ENCODE measurements at regions of chrX and their contacts with region 1.

Region 1: DNA sequence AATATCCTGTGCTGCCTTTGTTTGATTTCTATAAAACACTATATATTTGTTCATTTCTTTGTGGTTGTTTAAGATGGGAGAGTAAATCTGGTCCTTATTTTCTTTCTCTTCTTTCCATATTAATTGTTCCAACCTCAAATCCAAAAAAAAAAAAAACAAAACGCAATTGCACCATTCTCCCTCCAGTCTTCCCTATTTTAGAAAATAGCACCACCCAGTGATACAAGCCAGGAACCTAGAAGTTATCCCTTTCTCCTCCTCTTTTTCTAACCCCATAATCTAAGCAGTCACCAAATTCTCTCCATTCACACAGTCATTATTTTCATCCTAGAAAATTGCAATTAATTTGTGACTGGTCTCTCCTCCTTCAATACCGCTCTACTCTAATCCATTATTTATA is 107.8 kb downstream of the GABRA3 start:
- DNase-seq: no peak
- ATAC-seq: no peak
- H3K4me3 ChIP-seq: no peak overlapping the region
- H3K27ac ChIP-seq: no peak overlapping the region
- H3K4me1 ChIP-seq: no peaks in the 10 kb centered on the region
- H3K27me3 ChIP-seq: peaks cover 0 to 3% (median 0%) of the 10 kb centered on the region in 7 donors
- CTCF ChIP-seq: peak in 5 of 9 donors; percentile 9 to 39 (median 34)

Region 2: GRCh38 chrX:151753313-151754041 is 589.8 kb before region 1 on chrX:
- intact Hi-C with region 1: loop called in 5 of 10 experiments (anchors 5 to 10 kb)
- DNase-seq: peak; percentile 15 to 54
- ATAC-seq: peak; percentile 75 to 95 (median 88)
- H3K4me3 ChIP-seq: no peak overlapping the region
- H3K27ac ChIP-seq: no peak overlapping the region
- H3K4me1 ChIP-seq: no peaks in the 10 kb centered on the region
- H3K27me3 ChIP-seq: peaks cover 0 to 49% (median 0%) of the 10 kb centered on the region in 7 donors
- CTCF ChIP-seq: peak; percentile 56 to 82 (median 78)

Region 3: DNA sequence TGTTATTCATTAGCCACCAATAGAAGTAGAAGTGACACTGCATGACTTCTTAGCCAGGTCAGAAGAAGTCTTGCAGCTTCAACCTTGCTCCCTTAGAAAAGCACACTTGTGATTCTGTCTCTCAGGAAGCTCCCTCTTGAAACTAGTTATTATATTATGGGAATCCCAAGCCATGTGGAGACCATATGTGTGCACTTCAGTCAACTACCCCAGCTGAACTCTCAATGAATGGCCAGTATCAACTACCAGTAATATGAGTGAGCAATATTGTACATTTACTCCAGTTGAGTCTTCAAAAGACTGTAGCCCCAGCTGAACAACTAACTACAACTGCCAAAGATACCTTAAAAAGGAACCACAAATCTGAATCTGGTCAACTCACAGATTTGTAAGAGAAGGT is 184.9 kb after region 1 on chrX:
- intact Hi-C with region 1: no loop called
- DNase-seq: no peak
- ATAC-seq: no peak
- H3K4me3 ChIP-seq: no peak overlapping the region
- H3K27ac ChIP-seq: no peak overlapping the region
- H3K4me1 ChIP-seq: no peaks in the 10 kb centered on the region
- H3K27me3 ChIP-seq: no peaks in the 10 kb centered on the region
- CTCF ChIP-seq: no peak

Measured in heart right ventricle (tissue), 16 donors.